CD8-positive, alpha-beta T cell (primary cell): ENCODE measurements at regions of chr16 and their contacts with region 1.

Region 1: DNA sequence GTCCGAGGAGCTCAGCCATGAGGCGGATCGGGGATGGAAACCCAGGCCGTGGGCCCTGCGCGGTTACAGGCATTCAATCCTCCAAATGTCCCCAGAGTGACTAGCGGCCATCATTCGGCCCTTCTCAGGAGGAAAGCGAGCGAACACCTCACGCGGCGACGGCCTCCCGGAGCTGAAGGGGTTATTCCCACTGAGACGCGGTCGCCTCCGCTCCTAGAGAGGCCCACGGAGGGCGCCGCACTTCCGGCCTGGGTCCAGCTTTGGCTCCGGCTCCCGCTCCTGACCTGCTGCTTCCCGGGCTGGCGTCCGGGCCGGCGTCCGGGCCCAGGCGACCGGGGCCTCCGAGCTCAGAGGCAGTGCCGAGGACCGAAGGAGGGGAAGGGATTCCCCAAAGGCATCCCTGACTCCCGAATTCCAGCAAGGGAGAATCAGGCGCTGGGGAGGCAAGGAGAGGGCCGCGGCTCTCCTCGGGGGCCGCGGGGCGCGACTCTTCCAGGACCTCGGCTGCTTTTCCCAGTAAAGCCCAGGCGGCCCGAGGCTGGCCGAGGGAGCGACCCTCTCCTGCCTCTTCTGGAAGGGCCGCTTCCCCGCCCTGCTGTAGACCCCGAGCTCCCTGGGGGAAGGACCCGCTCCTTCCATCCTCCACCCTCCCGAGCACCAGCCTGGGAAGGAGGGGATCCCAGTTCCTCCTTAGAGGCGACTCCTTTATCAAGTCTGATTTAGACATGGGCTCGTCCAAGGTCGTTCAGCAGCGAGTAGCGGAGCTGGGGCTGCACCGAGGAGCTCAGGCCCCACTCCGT is 18.6 kb upstream of the ZNF629 start:
- DNase-seq: peak in 8 of 9 experiments; percentile 39 to 80 (median 64)
- ATAC-seq: peak; percentile 86
- H3K4me3 ChIP-seq: peak overlapping the region; percentile 75 to 89
- H3K4me3 Mint-ChIP-seq: peak overlapping the region; percentile 83
- H3K27ac ChIP-seq: peak overlapping the region; percentile 36 to 48
- H3K27ac Mint-ChIP-seq: peak overlapping the region; percentile 55
- H3K4me1 ChIP-seq: peaks cover 16% of the 10 kb centered on the region
- H3K4me1 Mint-ChIP-seq: peaks cover 21% of the 10 kb centered on the region
- H3K27me3 ChIP-seq: no peaks in the 10 kb centered on the region
- H3K27me3 Mint-ChIP-seq: no peaks in the 10 kb centered on the region
- CTCF ChIP-seq: no peak

Region 2: GRCh38 chr16:30637942-30638341 is 167.6 kb before region 1 on chr16:
- CTCF ChIA-PET with region 1: no interaction called
- POLR2A ChIA-PET with region 1: no interaction called
- intact Hi-C with region 1: no loop called
- DNase-seq: peak in 2 of 9 experiments; percentile 58 to 69
- ATAC-seq: no peak
- H3K4me3 ChIP-seq: no peak overlapping the region
- H3K4me3 Mint-ChIP-seq: no peak overlapping the region
- H3K27ac ChIP-seq: no peak overlapping the region
- H3K27ac Mint-ChIP-seq: no peak overlapping the region
- H3K4me1 ChIP-seq: peaks cover 13% of the 10 kb centered on the region
- H3K4me1 Mint-ChIP-seq: peaks cover 15% of the 10 kb centered on the region
- H3K27me3 ChIP-seq: no peaks in the 10 kb centered on the region
- H3K27me3 Mint-ChIP-seq: no peaks in the 10 kb centered on the region
- CTCF ChIP-seq: peak; percentile 36

Region 3: DNA sequence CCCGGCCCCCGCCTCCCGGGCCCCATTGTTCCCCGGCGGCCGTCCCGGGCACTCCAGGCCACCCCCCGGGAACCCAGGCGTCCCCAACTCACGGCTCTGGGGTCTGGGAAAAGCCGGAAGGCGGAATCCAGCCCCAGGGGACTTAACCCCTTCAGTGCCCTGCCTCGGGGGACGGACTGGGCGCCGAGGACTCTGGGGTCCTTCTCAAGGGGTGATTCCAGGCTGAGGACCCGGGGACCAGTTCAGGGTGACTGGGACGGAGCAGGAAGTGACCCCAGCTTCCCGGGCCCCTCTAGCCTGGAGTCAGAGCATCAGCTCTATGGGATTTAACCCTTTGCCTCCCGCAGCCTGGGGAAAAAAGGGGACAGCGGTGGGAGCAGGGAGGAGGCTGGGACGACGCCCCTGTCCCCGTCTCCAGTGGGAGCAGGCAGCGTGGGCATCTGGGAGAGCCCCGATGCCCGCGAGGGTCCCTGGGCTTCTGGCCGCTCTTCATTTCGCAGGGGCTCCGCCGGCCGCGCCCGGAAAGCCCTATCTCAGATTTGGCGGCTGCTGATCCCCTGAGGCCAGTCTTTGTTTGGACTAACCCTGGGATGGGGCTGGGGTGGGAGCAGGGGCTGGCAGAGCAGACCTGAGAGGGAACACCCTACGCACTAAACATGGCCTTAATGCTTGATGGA is 18.5 kb before region 1 on chr16 and contains the start of gene ZNF629:
- CTCF ChIA-PET with region 1: interaction called, 3 read pairs
- POLR2A ChIA-PET with region 1: interaction called, 12 read pairs
- intact Hi-C with region 1: loop called in 1 of 2 experiments (anchors 1 kb)
- DNase-seq: peak in 6 of 9 experiments; percentile 20 to 60 (median 43)
- ATAC-seq: peak; percentile 59
- H3K4me3 ChIP-seq: peak within 1 kb of the TSS; percentile 79 to 99
- H3K4me3 Mint-ChIP-seq: peak within 1 kb of the TSS; percentile 83
- H3K27ac ChIP-seq: peak within 1 kb of the TSS in 1 of 2 experiments; percentile 32
- H3K27ac Mint-ChIP-seq: no peak within 1 kb of the TSS
- H3K4me1 ChIP-seq: peaks cover 17% of the 10 kb centered on the region
- H3K4me1 Mint-ChIP-seq: peaks cover 15% of the 10 kb centered on the region
- H3K27me3 ChIP-seq: peaks cover 0 to 11% of the 10 kb centered on the region in 2 experiments
- H3K27me3 Mint-ChIP-seq: no peaks in the 10 kb centered on the region
- CTCF ChIP-seq: no peak
- total RNA-seq, gene ZNF629: 1.7 to 1.9 TPM